ENCODE measurements at regions of chr7 and their contacts with region 1.

Region 1: GRCh38 chr7:5677538-5678294 is 103.7 kb downstream of the RNF216 start:
- DNase-seq: no peak
- H3K4me3 ChIP-seq: no peak overlapping the region
- CTCF ChIP-seq: peak; percentile 71

Region 2: GRCh38 chr7:5557920-5558401 is 119.8 kb before region 1 on chr7:
- CTCF ChIA-PET with region 1: no interaction called
- POLR2A ChIA-PET with region 1: no interaction called
- DNase-seq: no peak
- H3K4me3 ChIP-seq: no peak overlapping the region
- CTCF ChIP-seq: no peak

Region 3: DNA sequence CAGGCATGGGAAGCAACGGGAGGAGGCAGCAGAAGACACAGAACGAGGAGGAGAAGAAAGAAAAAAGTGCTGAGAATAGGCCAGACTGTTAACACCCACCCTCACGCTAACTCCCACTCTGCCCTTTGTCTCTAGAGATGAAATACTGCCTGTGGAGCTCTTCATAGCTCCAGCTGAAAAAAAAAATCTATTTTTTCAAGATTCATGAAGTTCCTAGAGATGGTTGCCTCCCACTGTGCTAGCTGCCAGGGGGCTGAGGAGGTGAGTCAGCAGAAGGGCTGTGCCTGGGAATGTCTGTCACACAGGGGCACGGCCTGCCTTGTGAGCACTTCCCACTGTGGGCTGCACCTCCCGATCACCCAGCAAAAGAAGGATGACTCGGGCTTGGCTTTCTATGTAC is 40.8 kb before region 1 on chr7:
- CTCF ChIA-PET with region 1: interaction called, 11 read pairs
- POLR2A ChIA-PET with region 1: no interaction called
- DNase-seq: peak; percentile 59
- H3K4me3 ChIP-seq: no peak overlapping the region
- CTCF ChIP-seq: no peak

Region 4: GRCh38 chr7:5657901-5658300 is 19.8 kb before region 1 on chr7:
- CTCF ChIA-PET with region 1: interaction called, 19 read pairs
- POLR2A ChIA-PET with region 1: no interaction called
- DNase-seq: no peak
- H3K4me3 ChIP-seq: no peak overlapping the region
- CTCF ChIP-seq: no peak

Region 5: DNA sequence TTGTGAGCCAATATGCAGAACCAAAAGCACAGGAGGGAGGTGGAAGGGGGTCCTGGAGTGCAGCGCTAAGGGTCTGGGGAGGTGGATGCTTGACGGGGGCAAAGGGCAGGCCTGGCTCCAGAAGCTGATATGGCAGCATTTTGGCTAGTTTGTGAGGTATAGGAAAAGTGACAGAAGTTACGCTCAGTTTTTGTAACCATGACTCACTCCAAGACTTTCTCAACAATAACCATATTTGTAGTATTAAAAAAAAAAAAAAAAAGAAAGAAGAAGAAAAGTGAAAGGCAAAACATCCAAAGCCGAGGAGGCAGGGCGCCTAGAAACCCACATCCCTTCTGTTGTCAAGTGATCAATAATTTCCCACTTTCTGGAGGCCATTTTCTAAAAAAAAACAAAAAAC is 11.4 kb after region 1 on chr7:
- CTCF ChIA-PET with region 1: interaction called, 171 read pairs
- POLR2A ChIA-PET with region 1: interaction called, 3 read pairs
- DNase-seq: no peak
- H3K4me3 ChIP-seq: no peak overlapping the region
- CTCF ChIP-seq: no peak

Region 6: DNA sequence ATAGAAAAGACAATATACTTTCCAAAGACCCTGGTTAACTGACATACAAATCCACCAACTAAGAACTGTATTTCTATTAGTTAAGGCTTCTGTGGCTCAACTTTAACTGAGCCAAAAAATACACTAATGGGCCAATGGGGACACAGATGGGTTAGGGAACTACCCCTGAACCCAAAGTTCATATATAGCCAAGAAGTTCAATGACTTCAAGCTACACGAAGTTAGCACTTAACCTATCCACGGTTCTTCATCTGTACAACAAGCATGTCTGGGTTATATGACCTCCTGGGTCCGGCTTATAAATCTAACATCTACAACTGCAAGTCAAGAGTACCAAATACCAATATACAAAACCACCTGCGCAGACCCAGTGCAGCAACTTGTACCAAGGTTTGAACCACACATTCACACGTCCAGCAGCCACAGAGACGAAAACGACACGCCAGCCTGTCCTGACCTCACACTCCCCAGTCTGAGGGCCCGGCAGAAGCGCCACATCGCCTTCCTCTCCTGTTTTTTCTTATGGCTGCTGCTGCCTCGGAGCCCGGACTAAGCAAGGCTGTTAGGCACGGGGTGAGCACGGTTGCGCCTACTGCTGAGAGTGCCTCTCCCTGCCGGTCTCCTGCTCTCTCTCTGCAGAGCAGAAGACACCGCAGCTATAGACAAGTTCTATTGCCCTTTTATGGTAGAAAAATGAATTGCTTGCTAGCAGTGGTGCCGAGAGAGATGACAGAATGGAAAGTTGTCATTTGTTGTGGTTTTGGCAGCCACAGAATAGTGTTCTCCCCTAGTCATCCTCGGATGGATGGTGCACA is 17.4 kb after region 1 on chr7:
- CTCF ChIA-PET with region 1: interaction called, 171 read pairs
- POLR2A ChIA-PET with region 1: interaction called, 5 read pairs
- DNase-seq: peak; percentile 88
- H3K4me3 ChIP-seq: peak overlapping the region; percentile 61
- CTCF ChIP-seq: no peak

Region 7: DNA sequence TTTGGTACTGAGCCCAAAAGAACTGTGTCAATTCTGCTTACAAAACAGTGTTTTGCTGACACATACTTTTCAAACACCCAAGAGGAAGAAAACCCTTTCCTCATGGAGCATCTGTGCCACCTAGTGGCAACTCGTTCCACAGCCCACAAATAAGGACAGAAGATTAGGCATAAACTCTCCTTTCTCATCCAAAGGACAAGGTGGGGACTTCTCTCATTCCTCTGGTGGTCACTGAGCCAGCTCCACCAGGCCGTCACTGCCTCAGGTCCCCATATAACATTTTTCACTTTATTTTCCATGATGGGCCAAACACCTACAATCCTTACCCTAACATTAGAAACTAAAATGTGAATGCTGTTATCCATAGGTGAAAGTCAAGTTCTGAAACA is 26.8 kb after region 1 on chr7:
- CTCF ChIA-PET with region 1: interaction called, 171 read pairs
- POLR2A ChIA-PET with region 1: no interaction called
- DNase-seq: no peak
- H3K4me3 ChIP-seq: no peak overlapping the region
- CTCF ChIP-seq: peak; percentile 78

Region 8: GRCh38 chr7:6350433-6351058 is 672.8 kb after region 1 on chr7:
- CTCF ChIA-PET with region 1: no interaction called
- POLR2A ChIA-PET with region 1: no interaction called
- DNase-seq: no peak
- H3K4me3 ChIP-seq: no peak overlapping the region
- CTCF ChIP-seq: no peak